ENCODE measurements at regions of chr1 and their contacts with region 1.

Region 1: GRCh38 chr1:160006312-160006940 is 25.4 kb downstream of the PIGM start:
- DNase-seq: peak; percentile 86
- ATAC-seq: peak; percentile 95
- H3K4me3 Mint-ChIP-seq: no peak overlapping the region
- H3K27ac Mint-ChIP-seq: no peak overlapping the region
- H3K4me1 Mint-ChIP-seq: no peaks in the 10 kb centered on the region
- H3K27me3 Mint-ChIP-seq: peaks cover 8% of the 10 kb centered on the region; the same call in 1 of the 2 replicates
- CTCF ChIP-seq: peak; percentile 93

Region 2: DNA sequence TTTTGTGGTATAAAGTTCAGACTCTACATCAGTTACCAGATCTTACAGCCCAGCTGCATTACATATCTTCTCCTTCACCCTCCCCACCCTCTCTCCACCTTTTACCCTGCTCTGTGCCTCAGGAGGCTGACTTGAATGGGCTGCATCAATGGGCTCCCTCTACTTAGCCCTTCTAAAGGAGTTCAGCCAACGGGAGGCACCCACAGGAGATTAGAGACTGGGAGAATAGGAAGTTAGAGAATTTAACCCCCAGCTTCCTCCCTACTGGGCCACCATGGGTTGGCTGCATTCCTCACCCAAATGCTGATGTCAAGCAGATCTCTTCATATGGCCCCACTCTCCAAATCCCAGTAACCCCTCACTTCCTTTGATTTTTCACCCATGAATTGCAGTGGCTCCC is 242.7 kb before region 1 on chr1:
- CTCF ChIA-PET with region 1: no interaction called
- POLR2A ChIA-PET with region 1: no interaction called
- DNase-seq: no peak
- ATAC-seq: 0 out of 2 replicates have a peak, but pooled peaks have one; percentile 36
- H3K4me3 Mint-ChIP-seq: no peak overlapping the region
- H3K27ac Mint-ChIP-seq: no peak overlapping the region
- H3K4me1 Mint-ChIP-seq: peaks cover 9% of the 10 kb centered on the region
- H3K27me3 Mint-ChIP-seq: no peaks in the 10 kb centered on the region; the same call in 1 of the 2 replicates
- CTCF ChIP-seq: no peak

Region 3: DNA sequence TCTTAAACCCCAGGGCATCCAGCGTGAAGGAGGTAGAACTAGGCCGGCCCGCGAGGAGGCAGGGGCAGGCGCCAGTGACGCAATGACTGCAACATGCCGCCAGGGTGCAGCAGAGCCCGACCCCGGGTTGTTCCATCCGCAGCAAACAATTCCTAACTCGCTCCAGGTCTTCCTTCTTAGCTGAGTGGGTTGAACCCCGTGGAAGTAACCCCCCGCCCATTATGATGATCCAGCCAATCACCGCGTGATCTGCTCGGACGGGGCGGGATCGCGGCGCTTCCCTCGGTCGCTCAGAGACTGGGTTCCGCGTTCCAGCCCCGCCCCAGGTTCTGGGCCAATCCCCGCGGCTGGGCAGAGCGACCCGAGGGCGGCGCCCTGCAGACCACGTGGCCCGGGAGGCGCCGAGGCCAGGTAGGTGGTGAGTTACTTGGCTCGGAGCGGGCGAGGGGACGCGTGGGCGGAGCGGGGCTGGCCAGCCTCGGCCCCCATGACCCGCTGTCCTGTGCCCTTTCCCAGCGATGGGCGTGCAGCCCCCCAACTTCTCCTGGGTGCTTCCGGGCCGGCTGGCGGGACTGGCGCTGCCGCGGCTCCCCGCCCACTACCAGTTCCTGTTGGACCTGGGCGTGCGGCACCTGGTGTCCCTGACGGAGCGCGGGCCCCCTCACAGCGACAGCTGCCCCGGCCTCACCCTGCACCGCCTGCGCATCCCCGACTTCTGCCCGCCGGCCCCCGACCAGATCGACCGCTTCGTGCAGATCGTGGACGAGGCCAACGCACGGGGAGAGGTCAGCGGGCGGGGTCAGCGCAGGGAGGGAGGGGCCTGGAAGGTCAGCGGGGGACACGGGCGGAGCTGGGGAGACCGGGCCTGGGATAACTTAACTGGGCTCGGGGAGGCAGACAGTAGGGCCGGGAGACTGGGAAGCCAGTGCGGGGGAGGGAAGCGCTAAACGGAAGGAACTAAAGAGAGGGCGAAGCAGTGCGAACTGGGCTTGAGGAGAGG is 225.5 kb before region 1 on chr1 and contains the start of gene DUSP23:
- CTCF ChIA-PET with region 1: interaction called, 12 read pairs
- POLR2A ChIA-PET with region 1: no interaction called
- DNase-seq: peak; percentile 98
- ATAC-seq: peak; percentile 94
- H3K4me3 Mint-ChIP-seq: peak within 1 kb of the TSS; percentile 77
- H3K27ac Mint-ChIP-seq: no peak within 1 kb of the TSS
- H3K4me1 Mint-ChIP-seq: peaks cover 37% of the 10 kb centered on the region
- H3K27me3 Mint-ChIP-seq: peaks cover 12% of the 10 kb centered on the region
- CTCF ChIP-seq: peak; percentile 90
- total RNA-seq, gene DUSP23: 35.2 to 52.1 TPM (median 47.5 TPM) in 3 replicates

Region 4: DNA sequence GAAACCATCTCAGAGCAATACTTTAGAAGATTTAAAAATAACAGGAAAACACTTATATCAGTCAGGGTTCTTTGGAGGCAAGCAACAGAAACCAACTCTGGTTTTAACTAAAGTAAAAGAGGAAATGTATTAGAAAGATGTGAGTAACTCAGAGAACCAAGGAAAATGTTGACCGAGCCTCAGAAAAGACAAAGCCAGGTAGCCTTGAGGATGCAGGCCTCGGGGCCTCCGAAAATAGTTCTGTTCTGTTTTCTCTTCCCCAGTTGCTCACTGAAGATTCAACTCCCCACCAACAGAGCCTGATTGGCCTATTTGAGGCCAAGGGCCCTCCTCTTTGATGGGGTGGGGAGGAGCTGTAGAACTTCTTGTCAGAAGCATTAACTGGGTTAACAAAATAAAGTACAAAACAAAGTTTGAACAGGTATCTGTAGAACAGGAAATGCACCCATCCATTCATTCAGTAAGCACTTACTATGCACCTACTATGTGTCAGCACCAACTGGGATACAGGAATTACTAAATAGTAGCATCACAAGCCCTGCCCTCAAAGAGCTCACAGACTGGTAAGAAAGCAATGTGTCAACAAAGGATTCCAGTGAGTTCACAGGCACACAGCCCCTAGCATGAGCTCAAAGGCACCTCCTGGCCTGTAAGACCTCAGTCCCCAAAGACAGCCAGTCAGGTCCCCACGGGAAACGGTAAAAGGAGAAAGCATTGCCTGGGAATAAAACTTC is 167.1 kb before region 1 on chr1:
- CTCF ChIA-PET with region 1: interaction called, 12 read pairs
- POLR2A ChIA-PET with region 1: no interaction called
- DNase-seq: no peak
- ATAC-seq: no peak
- H3K4me3 Mint-ChIP-seq: no peak overlapping the region
- H3K27ac Mint-ChIP-seq: no peak overlapping the region
- H3K4me1 Mint-ChIP-seq: peaks cover 9% of the 10 kb centered on the region
- H3K27me3 Mint-ChIP-seq: no peaks in the 10 kb centered on the region; the same call in 1 of the 2 replicates
- CTCF ChIP-seq: no peak

Region 5: GRCh38 chr1:159916184-159917051 is 90.0 kb before region 1 on chr1:
- CTCF ChIA-PET with region 1: interaction called, 64 read pairs
- POLR2A ChIA-PET with region 1: no interaction called
- DNase-seq: no peak
- ATAC-seq: peak; percentile 64
- H3K4me3 Mint-ChIP-seq: no peak overlapping the region
- H3K27ac Mint-ChIP-seq: peak overlapping the region; percentile 92
- H3K4me1 Mint-ChIP-seq: peaks cover 45% of the 10 kb centered on the region
- H3K27me3 Mint-ChIP-seq: no peaks in the 10 kb centered on the region
- CTCF ChIP-seq: no peak

Region 6: DNA sequence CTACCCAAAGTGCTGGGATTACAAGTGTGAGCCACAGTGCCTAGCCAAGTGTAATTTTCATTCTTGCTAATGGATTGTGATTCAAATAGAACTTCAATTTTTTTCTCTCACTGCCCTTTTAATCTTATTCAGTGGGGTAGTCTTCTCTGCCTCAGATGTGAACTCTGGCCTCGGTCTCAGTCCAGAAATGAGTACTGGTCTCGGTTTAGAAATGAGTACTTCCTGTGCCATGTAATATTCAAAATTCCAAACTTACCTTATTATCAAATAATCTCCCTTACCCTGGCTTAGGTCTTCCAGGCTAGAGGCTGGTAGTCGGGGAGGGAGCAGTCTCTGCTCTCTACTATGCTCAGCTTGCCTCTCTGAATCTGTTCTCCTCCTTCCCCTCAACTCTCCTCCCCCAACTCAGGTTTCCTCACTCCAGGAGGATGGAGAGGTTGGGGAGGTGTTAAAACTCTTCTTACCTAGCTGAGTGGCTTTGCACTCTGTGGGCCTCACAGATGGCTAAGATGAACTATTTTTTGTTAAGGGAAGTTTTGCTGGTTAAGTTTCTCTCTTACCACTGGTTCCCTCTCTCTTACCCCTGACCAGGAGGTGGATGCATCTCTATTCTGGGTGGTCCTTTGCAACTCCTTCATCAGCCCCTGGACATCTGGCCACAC is 47.6 kb before region 1 on chr1:
- CTCF ChIA-PET with region 1: interaction called, 32 read pairs
- POLR2A ChIA-PET with region 1: no interaction called
- DNase-seq: no peak
- ATAC-seq: no peak
- H3K4me3 Mint-ChIP-seq: no peak overlapping the region
- H3K27ac Mint-ChIP-seq: 0 out of 2 replicates have a peak overlapping the region, but pooled peaks have one; percentile 13
- H3K4me1 Mint-ChIP-seq: no peaks in the 10 kb centered on the region; the same call in 1 of the 2 replicates
- H3K27me3 Mint-ChIP-seq: peaks cover 4% of the 10 kb centered on the region
- CTCF ChIP-seq: no peak

Region 7: DNA sequence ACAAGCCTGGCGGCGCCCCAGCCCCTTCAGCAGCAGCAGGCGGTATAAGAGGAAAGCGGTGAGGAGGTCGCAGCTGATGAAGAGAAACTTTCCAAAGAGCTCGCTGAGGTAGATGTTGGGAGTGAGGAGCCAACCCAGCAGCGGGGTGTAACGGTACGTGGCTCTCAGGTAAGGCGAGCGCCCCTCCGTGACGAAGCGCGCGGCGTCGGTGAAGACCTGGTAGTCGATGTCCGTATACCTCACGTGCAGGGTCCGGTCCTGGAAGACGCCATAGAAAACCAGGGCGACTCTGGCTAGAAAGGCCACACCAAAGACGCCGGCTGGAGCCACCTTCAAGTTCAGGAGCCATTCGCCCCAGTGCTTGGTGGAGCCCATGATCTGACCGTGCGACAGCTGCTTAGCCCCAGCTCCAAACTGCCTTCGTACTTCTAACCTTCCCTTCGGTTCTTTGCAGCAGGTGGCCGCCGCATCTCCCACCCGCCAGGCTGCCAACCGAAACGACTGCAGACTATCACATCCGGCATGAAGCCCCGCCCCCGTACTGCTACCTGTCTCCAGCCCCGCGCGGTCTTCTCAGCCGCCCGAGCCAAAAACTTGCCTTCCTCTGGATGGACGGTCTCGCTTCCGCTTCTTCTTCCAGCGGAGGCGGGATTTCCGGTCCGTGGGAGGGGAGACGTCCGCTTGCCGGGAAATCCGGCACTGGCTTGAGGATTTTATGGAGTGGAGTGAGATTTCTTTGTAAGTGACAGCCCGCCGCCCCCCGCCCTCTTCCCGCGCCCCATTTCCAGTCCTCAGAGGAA is 25.1 kb after region 1 on chr1 and contains the start of gene PIGM:
- CTCF ChIA-PET with region 1: interaction called, 17 read pairs
- POLR2A ChIA-PET with region 1: no interaction called
- DNase-seq: peak; percentile 99
- ATAC-seq: peak; percentile 98
- H3K4me3 Mint-ChIP-seq: peak within 1 kb of the TSS; percentile 91
- H3K27ac Mint-ChIP-seq: peak within 1 kb of the TSS; percentile 97
- H3K4me1 Mint-ChIP-seq: peaks cover 17% of the 10 kb centered on the region
- H3K27me3 Mint-ChIP-seq: peaks cover 12% of the 10 kb centered on the region; the same call in 1 of the 2 replicates
- CTCF ChIP-seq: no peak
- total RNA-seq, gene PIGM: 4.4 to 5.2 TPM (median 4.4 TPM) in 3 replicates

Region 8: GRCh38 chr1:160098852-160099561 is 92.6 kb after region 1 on chr1:
- CTCF ChIA-PET with region 1: interaction called, 14 read pairs
- POLR2A ChIA-PET with region 1: no interaction called
- DNase-seq: peak; percentile 99
- ATAC-seq: peak; percentile 78
- H3K4me3 Mint-ChIP-seq: peak overlapping the region; percentile 69
- H3K27ac Mint-ChIP-seq: peak overlapping the region; percentile 88
- H3K4me1 Mint-ChIP-seq: peaks cover 71% of the 10 kb centered on the region
- H3K27me3 Mint-ChIP-seq: peaks cover 5% of the 10 kb centered on the region; the same call in 1 of the 2 replicates
- CTCF ChIP-seq: no peak

Region 9: DNA sequence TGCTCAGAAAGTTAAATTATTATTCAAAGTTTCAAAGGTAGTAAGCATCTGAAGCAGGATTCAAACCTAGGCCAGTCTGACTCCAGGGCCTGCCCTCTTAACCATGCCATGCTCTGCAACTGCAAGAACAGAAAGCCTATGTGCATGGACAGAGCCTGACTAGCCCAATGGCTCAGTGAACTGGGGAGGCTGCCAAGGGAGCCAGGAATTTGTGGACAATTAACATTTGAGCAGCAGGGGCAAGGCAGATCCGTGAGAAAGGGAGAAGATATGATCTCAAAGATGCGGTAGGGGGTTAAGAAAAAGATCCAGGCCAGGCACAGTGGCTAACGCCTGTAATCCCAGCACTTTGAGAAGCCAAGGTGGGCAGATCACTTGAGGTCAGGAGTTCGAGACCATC is 138.5 kb after region 1 on chr1:
- CTCF ChIA-PET with region 1: no interaction called
- POLR2A ChIA-PET with region 1: no interaction called
- DNase-seq: no peak
- ATAC-seq: no peak; the same call in 1 of the 2 replicates
- H3K4me3 Mint-ChIP-seq: no peak overlapping the region
- H3K27ac Mint-ChIP-seq: peak overlapping the region; percentile 88
- H3K4me1 Mint-ChIP-seq: peaks cover 6% of the 10 kb centered on the region
- H3K27me3 Mint-ChIP-seq: no peaks in the 10 kb centered on the region; the same call in 1 of the 2 replicates
- CTCF ChIP-seq: no peak

Region 10: GRCh38 chr1:160726498-160727315 is 720.3 kb after region 1 on chr1:
- CTCF ChIA-PET with region 1: no interaction called
- POLR2A ChIA-PET with region 1: no interaction called
- DNase-seq: peak; percentile 69
- ATAC-seq: peak; percentile 86
- H3K4me3 Mint-ChIP-seq: no peak overlapping the region
- H3K27ac Mint-ChIP-seq: no peak overlapping the region
- H3K4me1 Mint-ChIP-seq: peaks cover 23% of the 10 kb centered on the region
- H3K27me3 Mint-ChIP-seq: no peaks in the 10 kb centered on the region; the same call in 1 of the 2 replicates
- CTCF ChIP-seq: peak; percentile 78

Measured in WTC11 (cell line).